Activated CD8-positive, alpha-beta T cell treated with anti-CD3 and anti-CD28 coated beads for 36 hours (primary cell): ENCODE measurements at regions of chrX and their contacts with region 1.

Region 1: DNA sequence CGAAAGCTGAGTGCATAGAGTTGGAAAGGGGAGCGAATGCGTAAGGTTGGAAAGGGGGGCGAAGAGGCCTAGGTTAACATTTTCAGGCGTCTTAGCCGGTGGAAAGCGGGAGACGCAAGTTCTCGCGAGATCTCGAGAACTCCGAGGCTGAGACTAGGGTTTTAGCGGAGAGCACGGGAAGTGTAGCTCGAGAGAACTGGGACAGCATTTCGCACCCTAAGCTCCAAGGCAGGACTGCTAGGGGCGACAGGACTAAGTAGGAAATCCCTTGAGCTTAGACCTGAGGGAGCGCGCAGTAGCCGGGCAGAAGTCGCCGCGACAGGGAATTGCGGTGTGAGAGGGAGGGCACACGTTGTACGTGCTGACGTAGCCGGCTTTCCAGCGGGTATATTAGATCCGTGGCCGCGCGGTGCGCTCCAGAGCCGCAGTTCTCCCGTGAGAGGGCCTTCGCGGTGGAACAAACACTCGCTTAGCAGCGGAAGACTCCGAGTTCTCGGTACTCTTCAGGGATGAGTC is at the start of gene DDX3X:
- DNase-seq: peak; percentile 85
- ATAC-seq: peak; percentile 61
- H3K4me3 Mint-ChIP-seq: peak within 1 kb of the TSS; percentile 92
- H3K27ac Mint-ChIP-seq: peak within 1 kb of the TSS; percentile 100
- H3K4me1 Mint-ChIP-seq: peaks cover 19% of the 10 kb centered on the region
- H3K27me3 Mint-ChIP-seq: no peaks in the 10 kb centered on the region
- CTCF ChIP-seq: no peak
- total RNA-seq, gene DDX3X: 172 to 181 TPM

Region 2: GRCh38 chrX:41275661-41276609 is 57.9 kb before region 1 on chrX:
- CTCF ChIA-PET with region 1: no interaction called
- POLR2A ChIA-PET with region 1: interaction called, 3 read pairs
- intact Hi-C with region 1: loop called (anchors 10 kb)
- DNase-seq: peak; percentile 65
- ATAC-seq: peak; percentile 76
- H3K4me3 Mint-ChIP-seq: peak overlapping the region; percentile 73
- H3K27ac Mint-ChIP-seq: peak overlapping the region; percentile 83
- H3K4me1 Mint-ChIP-seq: peaks cover 3% of the 10 kb centered on the region
- H3K27me3 Mint-ChIP-seq: no peaks in the 10 kb centered on the region
- CTCF ChIP-seq: peak; percentile 14

Region 3: GRCh38 chrX:41350976-41351569 is 17.3 kb after region 1 on chrX:
- CTCF ChIA-PET with region 1: no interaction called
- POLR2A ChIA-PET with region 1: interaction called, 16 read pairs
- intact Hi-C with region 1: no loop called
- DNase-seq: no peak
- ATAC-seq: peak; percentile 24
- H3K4me3 Mint-ChIP-seq: no peak overlapping the region
- H3K27ac Mint-ChIP-seq: peak overlapping the region; percentile 73
- H3K4me1 Mint-ChIP-seq: peaks cover 35% of the 10 kb centered on the region
- H3K27me3 Mint-ChIP-seq: no peaks in the 10 kb centered on the region
- CTCF ChIP-seq: no peak

Region 4: GRCh38 chrX:41441934-41442823 is 108.4 kb after region 1 on chrX:
- CTCF ChIA-PET with region 1: no interaction called
- POLR2A ChIA-PET with region 1: interaction called, 5 read pairs
- intact Hi-C with region 1: loop called (anchors 10 kb)
- DNase-seq: peak; percentile 83
- ATAC-seq: peak; percentile 97
- H3K4me3 Mint-ChIP-seq: peak overlapping the region; percentile 61
- H3K27ac Mint-ChIP-seq: peak overlapping the region; percentile 79
- H3K4me1 Mint-ChIP-seq: peaks cover 10% of the 10 kb centered on the region
- H3K27me3 Mint-ChIP-seq: no peaks in the 10 kb centered on the region
- CTCF ChIP-seq: peak; percentile 61